T-cell (primary cell): ENCODE measurements at regions of chr18 and their contacts with region 1.

Region 1: DNA sequence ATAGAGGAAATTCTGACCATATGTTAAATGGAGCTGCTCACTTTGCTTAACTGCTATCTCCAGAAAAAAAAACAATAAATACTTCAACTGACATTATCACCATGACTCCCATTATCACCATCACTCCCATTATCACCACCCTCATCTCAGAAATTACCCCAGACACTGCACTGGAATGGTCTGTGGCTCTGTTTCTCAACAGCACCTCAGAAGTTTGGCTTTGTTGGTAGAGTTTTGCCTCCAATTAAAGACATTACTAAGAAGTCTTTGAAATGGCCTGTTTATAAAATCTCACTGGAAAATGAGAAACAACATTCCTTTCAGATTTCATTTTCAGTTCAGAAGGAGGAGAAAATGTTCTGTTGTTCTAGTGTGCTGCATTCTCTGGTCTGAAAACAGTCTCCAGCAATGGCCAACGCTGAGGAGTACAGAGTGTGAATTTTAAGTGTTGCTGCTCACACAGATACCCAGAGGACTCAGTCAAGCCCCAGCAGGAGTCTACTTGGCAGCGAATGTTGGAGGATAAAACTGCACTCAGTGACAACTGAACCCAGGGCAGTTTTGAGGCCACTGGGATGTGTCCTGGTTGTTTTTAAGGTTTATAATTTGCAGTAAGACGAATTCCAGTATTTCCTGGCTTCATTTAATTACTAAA is 364.5 kb upstream of the CDH2 start:
- DNase-seq: no peak
- ATAC-seq: no peak
- H3K4me3 ChIP-seq: no peak overlapping the region
- H3K4me3 Mint-ChIP-seq: no peak overlapping the region
- H3K27ac ChIP-seq: no peak overlapping the region
- H3K27ac Mint-ChIP-seq: no peak overlapping the region
- H3K4me1 ChIP-seq: no peaks in the 10 kb centered on the region
- H3K4me1 Mint-ChIP-seq: no peaks in the 10 kb centered on the region
- H3K27me3 ChIP-seq: no peaks in the 10 kb centered on the region
- H3K27me3 Mint-ChIP-seq: no peaks in the 10 kb centered on the region

Region 2: DNA sequence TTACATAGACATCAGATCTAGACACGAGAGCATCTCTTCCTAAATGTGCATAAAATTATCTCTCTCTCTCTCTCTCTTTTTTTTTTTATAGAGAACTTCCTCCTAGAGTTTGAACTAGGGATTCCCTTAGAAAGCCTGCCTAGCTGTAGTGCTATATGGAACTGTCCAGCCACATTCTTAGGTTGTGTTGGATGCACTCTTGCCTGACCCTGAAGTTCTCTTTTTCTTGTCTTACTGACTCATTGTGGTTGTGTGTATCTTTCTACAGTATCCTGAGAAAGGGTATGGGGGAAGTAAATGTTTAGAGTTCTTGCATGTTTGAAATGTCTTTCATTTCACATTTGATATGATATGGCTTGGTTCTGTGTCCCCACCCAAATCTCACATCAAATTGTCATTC is 732.7 kb before region 1 on chr18:
- CTCF ChIA-PET with region 1: no interaction called
- POLR2A ChIA-PET with region 1: no interaction called
- DNase-seq: no peak
- ATAC-seq: no peak
- H3K4me3 ChIP-seq: no peak overlapping the region
- H3K4me3 Mint-ChIP-seq: no peak overlapping the region
- H3K27ac ChIP-seq: no peak overlapping the region
- H3K27ac Mint-ChIP-seq: no peak overlapping the region
- H3K4me1 ChIP-seq: no peaks in the 10 kb centered on the region
- H3K4me1 Mint-ChIP-seq: no peaks in the 10 kb centered on the region
- H3K27me3 ChIP-seq: no peaks in the 10 kb centered on the region
- H3K27me3 Mint-ChIP-seq: no peaks in the 10 kb centered on the region

Region 3: GRCh38 chr18:29664278-29665036 is 1123.1 kb after region 1 on chr18:
- CTCF ChIA-PET with region 1: no interaction called
- POLR2A ChIA-PET with region 1: interaction called in 1 of 2 experiments, 10 read pairs
- DNase-seq: no peak
- ATAC-seq: no peak
- H3K4me3 ChIP-seq: no peak overlapping the region
- H3K4me3 Mint-ChIP-seq: no peak overlapping the region
- H3K27ac ChIP-seq: no peak overlapping the region
- H3K27ac Mint-ChIP-seq: no peak overlapping the region
- H3K4me1 ChIP-seq: no peaks in the 10 kb centered on the region
- H3K4me1 Mint-ChIP-seq: no peaks in the 10 kb centered on the region
- H3K27me3 ChIP-seq: no peaks in the 10 kb centered on the region
- H3K27me3 Mint-ChIP-seq: no peaks in the 10 kb centered on the region